Right cardiac atrium (tissue), 5 donors: ENCODE measurements at regions of chr15 and their contacts with region 1.

Region 1: DNA sequence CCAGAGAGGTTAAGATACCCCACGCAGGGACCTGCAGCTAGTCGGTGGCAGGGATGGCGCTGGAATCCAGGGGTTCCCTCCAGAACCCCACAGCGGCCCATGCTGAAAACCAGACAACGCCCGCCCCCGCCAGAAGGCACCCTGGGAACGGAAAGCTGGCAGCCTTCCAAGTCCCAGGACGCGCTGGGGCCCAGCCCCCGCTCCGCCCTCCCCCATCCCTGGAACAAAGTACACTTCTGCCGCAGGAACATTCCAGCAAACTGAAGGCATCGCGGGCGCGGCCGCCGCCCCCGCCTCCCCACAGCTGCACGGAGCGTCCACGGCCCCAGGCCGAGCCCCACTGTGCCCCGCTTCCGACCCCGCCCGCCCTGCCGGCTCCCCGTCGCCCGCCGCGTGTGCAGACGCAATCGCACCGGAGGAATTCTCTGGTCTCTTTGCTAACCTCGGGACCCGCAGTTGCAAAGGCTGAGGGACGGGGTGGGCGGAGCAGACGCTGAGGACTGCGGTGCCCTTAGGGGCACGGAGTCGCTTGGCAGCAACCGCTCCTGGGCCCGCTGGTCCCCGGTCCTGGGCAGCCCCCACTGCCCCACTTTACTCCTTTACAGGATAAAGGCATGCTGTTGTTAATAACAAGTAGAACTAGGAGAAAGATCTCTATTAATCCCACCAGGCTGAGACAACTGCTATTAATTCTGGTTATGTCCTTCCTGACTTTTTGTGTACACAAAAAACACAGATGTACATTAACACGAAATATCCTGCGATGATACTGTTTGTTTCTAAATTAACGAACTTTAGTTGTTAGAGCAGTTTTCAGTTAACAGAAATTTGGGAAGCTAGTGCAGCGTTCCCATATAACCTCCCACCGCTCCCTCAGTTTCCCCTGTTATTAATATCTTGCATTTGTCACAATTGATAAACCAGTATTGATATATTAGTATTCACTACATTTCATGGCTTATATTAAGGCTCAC is 45.0 kb upstream of the RNU6-1 start:
- DNase-seq: peak; percentile 86 to 94 (median 93)
- ATAC-seq: peak; percentile 95 to 97
- H3K4me3 ChIP-seq: peak overlapping the region; percentile 54
- H3K27ac ChIP-seq: peak overlapping the region; percentile 38
- H3K4me1 ChIP-seq: no peaks in the 10 kb centered on the region
- H3K27me3 ChIP-seq: no peaks in the 10 kb centered on the region

Region 2: DNA sequence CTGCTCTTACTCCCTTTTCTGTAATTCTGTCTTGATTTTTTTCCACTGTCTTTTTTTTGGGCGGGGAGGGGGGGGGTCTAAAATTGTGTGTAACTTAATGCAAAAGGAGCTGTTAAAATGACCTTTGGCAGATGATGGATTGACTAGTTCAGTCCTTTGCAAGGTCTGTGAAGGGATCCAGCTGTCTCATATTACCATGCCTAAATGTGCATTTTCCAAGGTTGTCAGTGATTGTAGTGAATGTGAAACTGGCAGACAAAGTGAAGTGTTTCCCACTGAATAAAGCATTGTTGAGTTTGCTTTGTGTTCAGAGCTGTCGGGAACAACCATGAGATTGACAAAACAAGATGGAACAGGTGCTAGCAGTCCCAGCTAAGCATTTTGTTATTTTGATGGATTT is 169.6 kb before region 1 on chr15:
- intact Hi-C with region 1: no loop called
- DNase-seq: no peak
- ATAC-seq: no peak
- H3K4me3 ChIP-seq: no peak overlapping the region
- H3K27ac ChIP-seq: no peak overlapping the region
- H3K4me1 ChIP-seq: no peaks in the 10 kb centered on the region
- H3K27me3 ChIP-seq: no peaks in the 10 kb centered on the region

Region 3: GRCh38 chr15:67955252-67955651 is 70.5 kb after region 1 on chr15:
- intact Hi-C with region 1: loop called in 1 of 4 experiments (anchors 10 kb)
- DNase-seq: no peak
- ATAC-seq: peak in 1 of 2 donors; percentile 15
- H3K4me3 ChIP-seq: no peak overlapping the region
- H3K27ac ChIP-seq: no peak overlapping the region
- H3K4me1 ChIP-seq: peaks cover 3% of the 10 kb centered on the region
- H3K27me3 ChIP-seq: no peaks in the 10 kb centered on the region